ENCODE measurements at regions of chr6 and their contacts with region 1.

Region 1: GRCh38 chr6:97186416-97186999 is 96.5 kb downstream of the MMS22L start:
- DNase-seq: peak; percentile 80
- ATAC-seq: peak; percentile 80
- H3K4me3 Mint-ChIP-seq: no peak overlapping the region
- H3K27ac Mint-ChIP-seq: no peak overlapping the region
- H3K4me1 Mint-ChIP-seq: no peaks in the 10 kb centered on the region
- H3K27me3 Mint-ChIP-seq: no peaks in the 10 kb centered on the region

Region 2: GRCh38 chr6:97068211-97068610 is 118.3 kb before region 1 on chr6:
- CTCF ChIA-PET with region 1: no interaction called
- POLR2A ChIA-PET with region 1: no interaction called
- intact Hi-C with region 1: loop called (anchors 5 kb)
- DNase-seq: peak; percentile 45
- ATAC-seq: no peak
- H3K4me3 Mint-ChIP-seq: no peak overlapping the region
- H3K27ac Mint-ChIP-seq: no peak overlapping the region
- H3K4me1 Mint-ChIP-seq: peaks cover 3% of the 10 kb centered on the region
- H3K27me3 Mint-ChIP-seq: no peaks in the 10 kb centered on the region

Region 3: GRCh38 chr6:97073903-97074302 is 112.6 kb before region 1 on chr6:
- CTCF ChIA-PET with region 1: no interaction called
- POLR2A ChIA-PET with region 1: no interaction called
- intact Hi-C with region 1: loop called (anchors 5 kb)
- DNase-seq: no peak
- ATAC-seq: no peak
- H3K4me3 Mint-ChIP-seq: no peak overlapping the region
- H3K27ac Mint-ChIP-seq: no peak overlapping the region
- H3K4me1 Mint-ChIP-seq: no peaks in the 10 kb centered on the region
- H3K27me3 Mint-ChIP-seq: no peaks in the 10 kb centered on the region

Region 4: GRCh38 chr6:97123112-97123511 is 63.4 kb before region 1 on chr6:
- CTCF ChIA-PET with region 1: no interaction called
- POLR2A ChIA-PET with region 1: no interaction called
- intact Hi-C with region 1: no loop called
- DNase-seq: no peak
- ATAC-seq: no peak
- H3K4me3 Mint-ChIP-seq: no peak overlapping the region
- H3K27ac Mint-ChIP-seq: no peak overlapping the region
- H3K4me1 Mint-ChIP-seq: no peaks in the 10 kb centered on the region
- H3K27me3 Mint-ChIP-seq: no peaks in the 10 kb centered on the region

Region 5: GRCh38 chr6:97136335-97136991 is 50.0 kb before region 1 on chr6:
- CTCF ChIA-PET with region 1: no interaction called
- POLR2A ChIA-PET with region 1: no interaction called
- intact Hi-C with region 1: no loop called
- DNase-seq: no peak
- ATAC-seq: no peak
- H3K4me3 Mint-ChIP-seq: no peak overlapping the region
- H3K27ac Mint-ChIP-seq: no peak overlapping the region
- H3K4me1 Mint-ChIP-seq: no peaks in the 10 kb centered on the region
- H3K27me3 Mint-ChIP-seq: no peaks in the 10 kb centered on the region

Region 6: GRCh38 chr6:97262676-97263075 is 76.2 kb after region 1 on chr6:
- CTCF ChIA-PET with region 1: no interaction called
- POLR2A ChIA-PET with region 1: no interaction called
- intact Hi-C with region 1: no loop called
- DNase-seq: no peak
- ATAC-seq: no peak
- H3K4me3 Mint-ChIP-seq: no peak overlapping the region
- H3K27ac Mint-ChIP-seq: peak overlapping the region; percentile 13
- H3K4me1 Mint-ChIP-seq: no peaks in the 10 kb centered on the region
- H3K27me3 Mint-ChIP-seq: no peaks in the 10 kb centered on the region

Region 7: DNA sequence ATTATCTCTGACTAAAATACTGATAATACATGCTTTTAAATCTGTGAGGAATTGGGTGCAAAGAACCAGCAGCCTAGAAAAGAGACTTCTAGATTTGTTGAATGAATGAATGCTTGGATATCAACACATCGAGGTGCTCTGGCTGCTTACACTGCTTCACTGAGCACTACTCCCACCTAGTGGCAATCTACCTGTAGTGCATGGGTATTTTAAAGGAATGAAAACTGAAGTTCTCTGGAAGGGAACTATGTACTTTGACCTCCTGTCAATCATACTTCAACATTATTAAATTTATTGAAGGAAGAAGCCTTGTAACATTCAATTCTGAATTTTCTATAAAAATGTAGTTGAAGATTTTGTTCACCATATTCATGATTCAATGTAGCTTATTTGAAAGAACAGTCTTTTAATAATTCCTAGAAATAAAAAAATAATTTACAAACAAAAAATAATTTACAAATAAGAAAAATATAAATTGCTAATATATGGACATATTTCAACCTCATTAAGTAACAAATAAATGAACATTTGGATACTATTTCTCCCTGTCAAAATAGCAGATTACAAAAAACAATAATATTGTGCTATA is 207.7 kb after region 1 on chr6:
- CTCF ChIA-PET with region 1: interaction called, 8 read pairs
- POLR2A ChIA-PET with region 1: no interaction called
- intact Hi-C with region 1: loop called in 1 of 2 experiments (anchors 1 kb)
- DNase-seq: peak; percentile 58
- ATAC-seq: peak; percentile 70
- H3K4me3 Mint-ChIP-seq: no peak overlapping the region
- H3K27ac Mint-ChIP-seq: no peak overlapping the region
- H3K4me1 Mint-ChIP-seq: no peaks in the 10 kb centered on the region
- H3K27me3 Mint-ChIP-seq: peaks cover 10% of the 10 kb centered on the region

Region 8: GRCh38 chr6:97497713-97498331 is 311.3 kb after region 1 on chr6:
- CTCF ChIA-PET with region 1: no interaction called
- POLR2A ChIA-PET with region 1: no interaction called
- intact Hi-C with region 1: loop called in 1 of 2 experiments (anchors 2 kb)
- DNase-seq: peak; percentile 76
- ATAC-seq: peak; percentile 91
- H3K4me3 Mint-ChIP-seq: no peak overlapping the region
- H3K27ac Mint-ChIP-seq: no peak overlapping the region
- H3K4me1 Mint-ChIP-seq: no peaks in the 10 kb centered on the region
- H3K27me3 Mint-ChIP-seq: peaks cover 6% of the 10 kb centered on the region

Region 9: GRCh38 chr6:97978855-97979271 is 792.4 kb after region 1 on chr6:
- CTCF ChIA-PET with region 1: no interaction called
- POLR2A ChIA-PET with region 1: no interaction called
- intact Hi-C with region 1: no loop called
- DNase-seq: no peak
- ATAC-seq: no peak
- H3K4me3 Mint-ChIP-seq: no peak overlapping the region
- H3K27ac Mint-ChIP-seq: no peak overlapping the region
- H3K4me1 Mint-ChIP-seq: no peaks in the 10 kb centered on the region
- H3K27me3 Mint-ChIP-seq: no peaks in the 10 kb centered on the region